ENCODE measurements at regions of chr6 and their contacts with region 1.

Region 1: GRCh38 chr6:43386492-43386891 is 17.0 kb upstream of the ZNF318 start:
- DNase-seq: no peak
- H3K4me3 Mint-ChIP-seq: no peak overlapping the region
- H3K27ac Mint-ChIP-seq: no peak overlapping the region
- H3K4me1 Mint-ChIP-seq: peaks cover 51% of the 10 kb centered on the region
- H3K27me3 Mint-ChIP-seq: peaks cover 37% of the 10 kb centered on the region

Region 2: GRCh38 chr6:43059168-43060033 is 327.1 kb before region 1 on chr6 and contains the starts of genes KLC4 and MRPL2:
- intact Hi-C with region 1: loop called (anchors 10 kb)
- DNase-seq: peak; percentile 99
- H3K4me3 Mint-ChIP-seq: peak within 1 kb of the TSS; percentile 99
- H3K27ac Mint-ChIP-seq: peak within 1 kb of the TSS; percentile 98
- H3K4me1 Mint-ChIP-seq: peaks cover 35% of the 10 kb centered on the region
- H3K27me3 Mint-ChIP-seq: no peaks in the 10 kb centered on the region
- total RNA-seq, gene KLC4: 9.5 and 10.7 TPM in 2 replicates
- total RNA-seq, gene MRPL2: 83.8 and 103 TPM in 2 replicates

Region 3: GRCh38 chr6:43347021-43347420 is 39.5 kb before region 1 on chr6:
- intact Hi-C with region 1: no loop called
- DNase-seq: no peak
- H3K4me3 Mint-ChIP-seq: no peak overlapping the region
- H3K27ac Mint-ChIP-seq: no peak overlapping the region
- H3K4me1 Mint-ChIP-seq: no peaks in the 10 kb centered on the region
- H3K27me3 Mint-ChIP-seq: no peaks in the 10 kb centered on the region

Region 4: GRCh38 chr6:43369174-43370022 is 17.1 kb before region 1 on chr6 and contains the start of gene ZNF318:
- intact Hi-C with region 1: loop called (anchors 1 kb)
- DNase-seq: peak; percentile 98
- H3K4me3 Mint-ChIP-seq: peak within 1 kb of the TSS; percentile 85
- H3K27ac Mint-ChIP-seq: peak within 1 kb of the TSS; percentile 94
- H3K4me1 Mint-ChIP-seq: peaks cover 35% of the 10 kb centered on the region
- H3K27me3 Mint-ChIP-seq: peaks cover 1% of the 10 kb centered on the region
- total RNA-seq, gene ZNF318: 9.3 and 10.3 TPM in 2 replicates

Region 5: DNA sequence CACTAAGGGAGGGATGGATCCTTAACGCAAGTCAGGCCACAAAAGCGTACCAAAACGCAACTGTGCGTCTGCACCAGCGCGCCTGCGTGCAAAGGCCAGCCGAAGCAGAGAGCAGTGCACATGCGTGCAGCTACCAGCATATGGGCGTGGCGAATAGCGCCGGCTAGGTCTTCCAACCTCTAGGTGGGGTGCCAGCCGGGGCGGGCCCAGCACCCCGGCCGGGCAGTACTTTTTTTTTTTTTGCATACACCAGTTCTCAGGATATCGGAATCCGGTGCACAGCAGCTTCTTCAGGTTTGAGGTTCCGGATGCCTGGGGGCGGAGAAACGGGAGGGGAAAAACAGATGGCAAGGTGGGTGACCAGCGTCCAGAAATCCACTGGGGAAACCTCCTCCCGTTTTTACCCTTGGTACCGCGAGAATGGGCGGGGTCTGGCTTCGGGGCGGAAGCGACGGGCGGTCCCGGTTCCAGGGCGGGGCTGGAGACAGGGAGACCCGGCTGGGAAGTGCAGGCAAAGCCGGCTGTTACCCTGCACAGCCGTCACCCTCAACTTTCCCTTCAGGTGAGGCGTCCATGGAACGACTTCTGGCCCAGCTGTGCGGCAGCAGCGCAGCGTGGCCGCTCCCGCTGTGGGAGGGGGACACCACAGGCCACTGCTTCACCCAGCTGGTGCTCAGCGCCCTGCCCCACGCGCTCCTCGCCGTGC is 41.1 kb after region 1 on chr6 and contains the start of gene ABCC10:
- intact Hi-C with region 1: loop called (anchors 1 kb)
- DNase-seq: peak; percentile 98
- H3K4me3 Mint-ChIP-seq: peak within 1 kb of the TSS; percentile 98
- H3K27ac Mint-ChIP-seq: peak within 1 kb of the TSS; percentile 98
- H3K4me1 Mint-ChIP-seq: peaks cover 13% of the 10 kb centered on the region
- H3K27me3 Mint-ChIP-seq: no peaks in the 10 kb centered on the region
- total RNA-seq, gene ABCC10: 38.2 and 40.0 TPM in 2 replicates

Region 6: DNA sequence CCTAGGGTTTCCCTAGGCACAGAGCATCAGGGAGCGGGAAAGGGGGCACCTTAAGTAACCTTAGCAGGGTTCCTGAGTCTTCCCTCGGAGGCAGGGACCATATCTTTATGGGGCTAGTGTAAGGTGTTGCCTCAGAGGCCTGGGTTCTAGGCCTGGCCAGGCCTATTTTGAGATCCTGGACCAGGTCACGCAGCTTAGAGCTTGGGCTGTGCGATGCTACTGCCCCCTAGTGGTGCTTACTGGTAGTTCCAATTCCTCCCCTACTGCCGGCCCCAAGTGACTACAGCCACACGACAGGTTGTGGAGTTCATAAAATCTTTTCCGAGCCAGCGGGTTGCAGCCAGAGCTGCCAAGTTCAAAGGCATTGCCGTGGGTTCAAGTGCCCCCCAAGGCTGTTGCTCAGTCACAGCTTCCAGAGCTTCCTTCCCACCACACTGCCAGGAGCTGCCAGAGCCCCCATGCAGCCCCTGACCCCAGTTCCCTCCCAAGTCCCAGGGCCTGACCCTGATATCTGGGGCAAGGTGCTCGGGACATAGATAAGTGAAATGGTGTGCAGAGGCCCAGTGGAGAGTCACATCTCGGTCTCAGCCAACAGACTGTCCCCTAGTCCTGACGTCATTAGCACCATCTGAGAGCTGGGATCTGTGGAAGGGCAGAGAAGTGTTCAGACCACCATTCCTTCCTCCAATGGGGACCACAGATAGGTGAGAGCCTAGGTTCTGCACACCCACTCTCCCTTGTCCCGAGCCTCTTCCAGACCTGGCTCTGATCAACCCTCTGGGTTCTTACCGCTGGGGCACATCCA is 120.4 kb after region 1 on chr6:
- intact Hi-C with region 1: loop called (anchors 1 kb)
- DNase-seq: peak; percentile 95
- H3K4me3 Mint-ChIP-seq: no peak overlapping the region
- H3K27ac Mint-ChIP-seq: no peak overlapping the region
- H3K4me1 Mint-ChIP-seq: peaks cover 12% of the 10 kb centered on the region
- H3K27me3 Mint-ChIP-seq: peaks cover 19% of the 10 kb centered on the region

Region 7: GRCh38 chr6:43575772-43576551 is 189.5 kb after region 1 on chr6 and contains the starts of genes POLH and XPO5:
- intact Hi-C with region 1: loop called (anchors 10 kb)
- DNase-seq: peak; percentile 98
- H3K4me3 Mint-ChIP-seq: peak within 1 kb of the TSS; percentile 95
- H3K27ac Mint-ChIP-seq: peak within 1 kb of the TSS; percentile 90
- H3K4me1 Mint-ChIP-seq: peaks cover 46% of the 10 kb centered on the region
- H3K27me3 Mint-ChIP-seq: no peaks in the 10 kb centered on the region
- total RNA-seq, gene POLH: 34.2 and 37.9 TPM in 2 replicates
- total RNA-seq, gene XPO5: 143 and 145 TPM in 2 replicates

Measured in activated CD4-positive, alpha-beta T cell treated with anti-CD3 and anti-CD28 coated beads, Interleukin-2, amount 10 ng/mL, durations not matched to agents 24 days and 14 days (primary cell).